Activated CD4-positive, alpha-beta memory T cell treated with anti-CD3 and anti-CD28 coated beads, Interleukin-2, amount 10 ng/mL, durations not matched to agents 7 days and 5 days (primary cell): ENCODE measurements at regions of chr4 and their contacts with region 1.

Region 1: GRCh38 chr4:118850488-118851173 is 14.7 kb upstream of the SEC24D start:
- DNase-seq: peak; percentile 55
- H3K4me3 Mint-ChIP-seq: peak overlapping the region; percentile 94
- H3K27ac Mint-ChIP-seq: peak overlapping the region; percentile 90
- H3K4me1 Mint-ChIP-seq: peaks cover 22% of the 10 kb centered on the region
- H3K27me3 Mint-ChIP-seq: peaks cover 2% of the 10 kb centered on the region

Region 2: DNA sequence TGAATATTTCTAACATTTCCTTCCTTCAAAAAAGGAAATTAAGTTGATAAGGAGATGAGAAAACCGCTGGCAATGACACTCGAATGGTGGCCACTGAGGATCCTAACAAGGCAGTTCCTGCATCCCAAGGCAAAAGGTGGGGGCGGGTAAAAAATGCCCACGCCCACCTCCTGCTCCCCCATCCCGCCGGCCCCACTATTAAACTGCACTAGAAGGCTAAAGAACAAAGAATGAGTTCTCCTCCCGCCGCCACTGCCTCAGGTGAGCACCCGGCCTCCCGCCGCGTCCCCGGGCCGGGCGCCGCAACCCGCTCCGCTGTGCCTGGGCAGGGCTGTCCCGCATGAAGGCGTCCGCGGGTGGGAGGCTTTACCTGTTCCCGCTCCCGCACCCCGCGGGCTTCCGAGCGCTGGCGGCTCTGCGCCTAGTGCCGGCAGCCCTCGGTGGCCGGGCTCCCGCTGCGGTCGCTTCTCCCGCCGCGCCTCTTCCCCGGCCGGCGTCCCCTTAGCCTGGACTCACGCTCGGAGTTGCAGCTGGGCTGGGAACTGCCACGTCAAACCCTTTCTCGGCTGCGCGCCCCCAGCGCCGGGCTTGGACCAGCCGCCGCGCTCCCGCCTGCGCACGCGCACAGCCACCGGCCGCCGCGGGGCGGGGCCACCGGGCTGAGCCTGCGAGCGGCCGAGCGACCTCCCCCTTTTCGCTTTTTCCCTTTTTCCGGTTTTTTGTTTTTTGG is 14.9 kb before region 1 on chr4 and contains the start of gene SEC24D:
- CTCF ChIA-PET with region 1: interaction called, 3 read pairs
- POLR2A ChIA-PET with region 1: interaction called, 12 read pairs
- DNase-seq: peak; percentile 87
- H3K4me3 Mint-ChIP-seq: peak within 1 kb of the TSS; percentile 96
- H3K27ac Mint-ChIP-seq: peak within 1 kb of the TSS; percentile 95
- H3K4me1 Mint-ChIP-seq: peaks cover 37% of the 10 kb centered on the region
- H3K27me3 Mint-ChIP-seq: peaks cover 9% of the 10 kb centered on the region
- total RNA-seq, gene SEC24D: 59.9 to 62.8 TPM

Region 3: GRCh38 chr4:118865091-118865708 is 14.6 kb after region 1 on chr4:
- CTCF ChIA-PET with region 1: interaction called, 11 read pairs
- POLR2A ChIA-PET with region 1: interaction called, 6 read pairs
- DNase-seq: no peak
- H3K4me3 Mint-ChIP-seq: no peak overlapping the region
- H3K27ac Mint-ChIP-seq: no peak overlapping the region
- H3K4me1 Mint-ChIP-seq: peaks cover 2% of the 10 kb centered on the region
- H3K27me3 Mint-ChIP-seq: peaks cover 5% of the 10 kb centered on the region

Region 4: DNA sequence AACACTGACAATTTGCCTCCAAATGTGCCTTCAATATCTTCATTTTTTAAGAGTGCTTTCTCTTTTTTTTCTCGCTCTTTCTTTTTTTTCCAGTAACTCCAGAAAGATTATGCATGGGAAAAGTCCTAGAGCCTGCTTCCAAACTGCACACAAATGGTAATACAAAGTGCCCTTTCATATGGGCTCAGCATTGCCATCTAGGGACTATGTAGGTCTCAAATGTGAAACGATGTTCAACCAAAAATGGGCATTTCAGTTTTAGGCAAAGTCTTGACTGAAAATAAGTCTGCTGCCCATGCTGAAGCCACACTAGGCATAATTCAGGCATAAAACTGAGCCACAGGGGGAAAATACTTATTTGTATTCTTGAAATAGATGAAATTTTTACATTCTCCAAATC is 103.6 kb after region 1 on chr4:
- CTCF ChIA-PET with region 1: no interaction called
- POLR2A ChIA-PET with region 1: no interaction called
- DNase-seq: no peak
- H3K4me3 Mint-ChIP-seq: no peak overlapping the region
- H3K27ac Mint-ChIP-seq: no peak overlapping the region
- H3K4me1 Mint-ChIP-seq: no peaks in the 10 kb centered on the region
- H3K27me3 Mint-ChIP-seq: peaks cover 2% of the 10 kb centered on the region